AG04450 (cell line): ENCODE measurements at regions of chr1 and their contacts with region 1.

Region 1: GRCh38 chr1:157992031-157992832 is 1.2 kb upstream of the KIRREL1 start:
- DNase-seq: no peak
- H3K4me3 ChIP-seq: no peak overlapping the region
- H3K27ac ChIP-seq: no peak overlapping the region
- H3K27me3 ChIP-seq: peaks cover 4% of the 10 kb centered on the region
- CTCF ChIP-seq: peak; percentile 100

Region 2: GRCh38 chr1:157652859-157653493 is 339.3 kb before region 1 on chr1:
- CTCF ChIA-PET with region 1: no interaction called
- POLR2A ChIA-PET with region 1: no interaction called
- DNase-seq: no peak
- H3K4me3 ChIP-seq: no peak overlapping the region
- H3K27ac ChIP-seq: no peak overlapping the region
- H3K27me3 ChIP-seq: no peaks in the 10 kb centered on the region
- CTCF ChIP-seq: no peak

Region 3: GRCh38 chr1:157963713-157964112 is 28.5 kb before region 1 on chr1:
- CTCF ChIA-PET with region 1: interaction called, 108 read pairs
- POLR2A ChIA-PET with region 1: no interaction called
- DNase-seq: peak; percentile 51
- H3K4me3 ChIP-seq: no peak overlapping the region
- H3K27ac ChIP-seq: no peak overlapping the region
- H3K27me3 ChIP-seq: peaks cover 16% of the 10 kb centered on the region
- CTCF ChIP-seq: peak; percentile 92

Region 4: DNA sequence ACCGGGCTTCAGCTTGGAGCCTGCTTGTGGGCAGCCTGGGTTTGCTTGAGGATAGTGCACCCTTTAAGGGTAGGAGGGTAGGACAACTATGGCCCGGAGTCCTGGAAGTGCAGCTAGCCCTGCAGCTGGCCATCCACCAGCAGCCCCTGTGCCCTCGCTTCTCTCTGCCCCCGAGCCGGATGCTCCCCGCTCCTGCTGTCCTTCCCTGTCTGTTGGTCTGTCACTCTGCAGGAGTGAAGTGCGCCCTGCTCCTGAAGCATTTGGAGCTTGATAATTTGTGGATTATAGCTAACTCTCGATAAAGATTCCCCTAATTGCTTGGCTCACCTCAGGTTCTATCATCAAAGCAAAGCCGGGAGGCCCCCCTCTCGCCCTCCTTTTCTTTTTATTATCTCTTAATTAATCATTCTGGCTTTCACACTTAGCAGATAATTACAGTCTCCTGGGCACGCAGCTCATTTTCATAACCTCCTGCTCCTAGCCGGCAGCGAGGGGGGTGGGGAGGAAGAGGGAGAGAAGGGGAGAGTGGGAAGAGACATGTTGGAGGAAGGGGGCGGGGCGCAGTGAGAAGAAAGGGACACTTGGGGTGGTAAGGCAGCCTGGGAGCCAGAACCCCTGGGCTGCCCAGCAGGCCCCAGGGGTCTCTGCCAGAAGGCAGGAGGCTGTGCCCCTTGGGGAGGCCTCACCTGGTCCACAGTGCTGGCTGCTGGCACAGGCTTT is 15.6 kb after region 1 on chr1:
- CTCF ChIA-PET with region 1: interaction called, 48 read pairs
- POLR2A ChIA-PET with region 1: interaction called, 25 read pairs
- DNase-seq: no peak
- H3K4me3 ChIP-seq: no peak overlapping the region
- H3K27ac ChIP-seq: peak overlapping the region; percentile 99
- H3K27me3 ChIP-seq: no peaks in the 10 kb centered on the region
- CTCF ChIP-seq: no peak

Region 5: DNA sequence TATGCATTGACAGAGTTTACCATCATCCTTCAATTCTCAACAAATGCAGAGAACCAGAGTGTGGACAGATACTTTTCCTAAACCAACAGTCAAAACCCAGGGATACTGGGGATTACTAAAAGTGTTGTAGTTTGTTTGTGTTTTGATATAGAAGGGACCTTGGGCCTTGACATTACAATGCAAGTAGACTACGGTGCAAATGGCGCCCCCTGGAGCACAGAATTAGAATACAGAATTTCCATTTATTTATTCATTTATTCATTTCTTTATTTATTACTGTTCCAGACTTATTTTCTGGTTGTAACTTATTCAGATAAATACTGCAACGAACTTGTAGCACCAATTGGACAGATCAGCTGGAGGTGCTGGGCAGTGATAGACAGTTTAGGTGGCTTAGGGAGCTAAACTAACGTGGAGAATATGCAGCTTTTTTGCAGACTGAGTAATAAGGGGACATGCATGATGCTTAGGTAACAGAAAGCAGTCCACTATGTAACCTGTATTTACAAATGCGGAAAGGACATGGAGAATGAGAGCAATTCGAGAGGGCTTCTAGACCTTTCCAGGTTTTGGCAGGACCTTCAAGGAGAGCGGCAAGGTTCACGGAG is 43.8 kb after region 1 on chr1:
- CTCF ChIA-PET with region 1: interaction called, 146 read pairs
- POLR2A ChIA-PET with region 1: interaction called, 4 read pairs
- DNase-seq: no peak
- H3K4me3 ChIP-seq: no peak overlapping the region
- H3K27ac ChIP-seq: no peak overlapping the region
- H3K27me3 ChIP-seq: no peaks in the 10 kb centered on the region
- CTCF ChIP-seq: peak; percentile 76

Region 6: DNA sequence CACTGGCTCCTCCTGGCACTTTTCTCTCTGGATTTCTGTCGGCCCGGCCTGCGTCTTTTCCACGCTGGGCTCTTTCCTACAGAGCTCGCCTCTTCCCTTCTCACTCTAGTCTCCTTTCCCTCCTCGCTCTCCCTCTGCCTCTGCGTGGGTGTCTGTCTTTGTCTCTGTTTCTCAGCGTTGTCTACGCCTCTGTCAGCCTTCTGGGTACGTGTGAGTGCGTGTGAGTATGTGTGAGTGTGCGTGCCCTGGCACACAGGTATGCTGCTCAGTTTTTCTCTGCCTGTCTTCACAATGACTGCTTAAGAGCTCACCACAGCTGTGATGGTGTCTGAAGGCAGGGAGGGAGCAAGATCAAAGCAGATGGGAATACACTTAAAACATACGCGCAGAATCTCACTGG is 78.9 kb after region 1 on chr1:
- CTCF ChIA-PET with region 1: interaction called, 45 read pairs
- POLR2A ChIA-PET with region 1: interaction called, 3 read pairs
- DNase-seq: no peak
- H3K4me3 ChIP-seq: no peak overlapping the region
- H3K27ac ChIP-seq: peak overlapping the region; percentile 21
- H3K27me3 ChIP-seq: no peaks in the 10 kb centered on the region
- CTCF ChIP-seq: no peak

Region 7: GRCh38 chr1:158101927-158102326 is 109.7 kb after region 1 on chr1:
- CTCF ChIA-PET with region 1: interaction called, 105 read pairs
- POLR2A ChIA-PET with region 1: interaction called, 4 read pairs
- DNase-seq: no peak
- H3K4me3 ChIP-seq: no peak overlapping the region
- H3K27ac ChIP-seq: no peak overlapping the region
- H3K27me3 ChIP-seq: peaks cover 3% of the 10 kb centered on the region
- CTCF ChIP-seq: no peak

Region 8: GRCh38 chr1:158124999-158125398 is 132.8 kb after region 1 on chr1:
- CTCF ChIA-PET with region 1: interaction called, 590 read pairs
- POLR2A ChIA-PET with region 1: interaction called, 8 read pairs
- DNase-seq: peak; percentile 89
- H3K4me3 ChIP-seq: no peak overlapping the region
- H3K27ac ChIP-seq: no peak overlapping the region
- H3K27me3 ChIP-seq: peaks cover 40% of the 10 kb centered on the region
- CTCF ChIP-seq: peak; percentile 96